ENCODE measurements at regions of chr5 and their contacts with region 1.

Region 1: GRCh38 chr5:6448622-6449464 is at the start of gene UBE2QL1:
- DNase-seq: peak in 1 of 5 donors; percentile 40
- ATAC-seq: peak in 3 of 4 donors; percentile 52 to 63 (median 62)
- H3K4me3 ChIP-seq: peak within 1 kb of the TSS; percentile 39 to 76 (median 62)
- H3K27ac ChIP-seq: peak within 1 kb of the TSS in 11 of 12 donors; percentile 37 to 96 (median 80)
- H3K4me1 ChIP-seq: peaks cover 0 to 25% (median 10%) of the 10 kb centered on the region in 12 donors
- H3K27me3 ChIP-seq: peaks cover 0 to 40% (median 6%) of the 10 kb centered on the region in 9 donors
- CTCF ChIP-seq: no peak
- POLR2A ChIP-seq: no peak
- total RNA-seq, gene UBE2QL1: 9.8 to 32.0 (median 21.0) TPM

Region 2: DNA sequence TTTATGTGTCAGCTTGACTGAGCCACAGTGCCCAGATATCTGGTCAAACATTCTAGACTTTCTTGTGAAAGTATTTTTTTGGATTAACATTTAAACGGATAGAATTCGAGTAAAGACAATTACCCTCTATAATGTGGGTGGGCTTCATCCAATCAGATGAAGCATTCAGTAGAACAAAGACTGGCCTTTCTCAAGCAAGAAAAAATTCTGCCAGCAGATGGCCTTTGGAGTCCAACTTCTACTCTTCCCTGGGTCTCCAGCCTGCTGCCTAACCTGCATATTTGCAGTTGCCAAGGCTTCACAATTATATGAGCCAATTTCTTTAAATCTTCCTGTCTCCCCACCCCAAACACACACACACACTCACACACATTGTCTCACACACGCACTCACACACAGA is 156.9 kb before region 1 on chr5:
- intact Hi-C with region 1: loop called in 1 of 10 experiments (anchors 5 kb)
- DNase-seq: no peak
- ATAC-seq: no peak
- H3K4me3 ChIP-seq: no peak overlapping the region
- H3K27ac ChIP-seq: no peak overlapping the region
- H3K4me1 ChIP-seq: no peaks in the 10 kb centered on the region
- H3K27me3 ChIP-seq: no peaks in the 10 kb centered on the region
- CTCF ChIP-seq: peak in 10 of 12 donors; percentile 25 to 53 (median 41)
- POLR2A ChIP-seq: no peak

Region 3: GRCh38 chr5:6311568-6312501 is 137.0 kb before region 1 on chr5:
- intact Hi-C with region 1: loop called in 2 of 10 experiments (anchors 10 kb)
- DNase-seq: peak in 4 of 5 donors; percentile 57 to 78 (median 64)
- ATAC-seq: peak; percentile 97 to 100 (median 98)
- H3K4me3 ChIP-seq: no peak overlapping the region
- H3K27ac ChIP-seq: peak overlapping the region in 8 of 12 donors; percentile 18 to 86 (median 72)
- H3K4me1 ChIP-seq: peaks cover 0 to 17% (median 1%) of the 10 kb centered on the region in 12 donors
- H3K27me3 ChIP-seq: no peaks in the 10 kb centered on the region
- CTCF ChIP-seq: no peak
- POLR2A ChIP-seq: no peak

Region 4: GRCh38 chr5:6510132-6510531 is 61.3 kb after region 1 on chr5:
- intact Hi-C with region 1: loop called in 1 of 10 experiments (anchors 5 kb)
- DNase-seq: no peak
- ATAC-seq: peak in 3 of 4 donors; percentile 58 to 81 (median 80)
- H3K4me3 ChIP-seq: no peak overlapping the region
- H3K27ac ChIP-seq: no peak overlapping the region
- H3K4me1 ChIP-seq: peaks cover 0 to 6% (median 0%) of the 10 kb centered on the region in 12 donors
- H3K27me3 ChIP-seq: no peaks in the 10 kb centered on the region
- CTCF ChIP-seq: no peak
- POLR2A ChIP-seq: no peak

Region 5: DNA sequence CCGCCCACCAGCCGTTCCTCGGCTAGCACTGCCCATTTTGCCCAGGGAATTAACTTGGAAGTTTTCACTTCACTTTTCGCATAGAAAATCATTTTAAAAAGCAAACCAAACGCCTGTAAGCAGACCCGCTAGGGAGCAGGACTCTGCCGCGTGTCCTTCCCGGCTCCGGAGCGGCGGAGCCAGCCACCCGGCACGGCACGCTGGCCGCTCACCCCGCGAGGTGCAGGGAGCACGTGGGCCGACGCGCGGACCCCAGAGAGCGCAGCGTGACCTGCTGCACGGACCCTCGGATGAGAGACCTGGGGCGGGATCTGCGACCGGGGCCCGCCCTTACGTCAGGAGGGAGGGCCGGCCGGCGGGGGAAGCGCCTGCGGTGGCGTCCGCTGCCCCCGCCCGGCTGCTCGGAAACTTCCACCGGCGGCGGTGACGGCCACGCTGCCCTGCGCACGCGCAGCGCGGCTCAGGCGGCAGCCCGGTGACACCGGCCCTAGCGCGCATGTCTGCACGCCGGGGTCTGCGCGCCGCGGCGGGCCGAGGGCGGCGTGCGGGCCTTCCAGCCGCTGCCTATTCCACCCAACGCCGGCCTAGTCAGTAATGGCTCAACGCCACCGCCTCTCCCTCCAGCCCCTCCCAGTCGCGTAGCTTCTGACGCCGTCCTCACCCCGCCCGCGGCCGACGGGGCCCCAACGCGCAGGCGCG is 263.9 kb after region 1 on chr5:
- intact Hi-C with region 1: loop called in 1 of 10 experiments (anchors 10 kb)
- DNase-seq: peak; percentile 97 to 99 (median 97)
- ATAC-seq: peak; percentile 86 to 94 (median 90)
- H3K4me3 ChIP-seq: peak overlapping the region; percentile 46 to 98 (median 78)
- H3K27ac ChIP-seq: peak overlapping the region; percentile 89 to 100 (median 98)
- H3K4me1 ChIP-seq: peaks cover 9 to 48% (median 34%) of the 10 kb centered on the region in 12 donors
- H3K27me3 ChIP-seq: no peaks in the 10 kb centered on the region
- CTCF ChIP-seq: peak in 1 of 12 donors; percentile 3
- POLR2A ChIP-seq: peak in 1 of 2 donors; percentile 84

Region 6: GRCh38 chr5:6745706-6746222 is 296.9 kb after region 1 on chr5:
- intact Hi-C with region 1: loop called in 1 of 10 experiments (anchors 10 kb)
- DNase-seq: no peak
- ATAC-seq: peak; percentile 50 to 78 (median 58)
- H3K4me3 ChIP-seq: no peak overlapping the region
- H3K27ac ChIP-seq: peak overlapping the region in 6 of 12 donors; percentile 15 to 56 (median 26)
- H3K4me1 ChIP-seq: peaks cover 0 to 14% (median 8%) of the 10 kb centered on the region in 12 donors
- H3K27me3 ChIP-seq: no peaks in the 10 kb centered on the region
- CTCF ChIP-seq: peak; percentile 61 to 86 (median 76)
- POLR2A ChIP-seq: no peak